ENCODE measurements at regions of chr10 and their contacts with region 1.

Region 1: DNA sequence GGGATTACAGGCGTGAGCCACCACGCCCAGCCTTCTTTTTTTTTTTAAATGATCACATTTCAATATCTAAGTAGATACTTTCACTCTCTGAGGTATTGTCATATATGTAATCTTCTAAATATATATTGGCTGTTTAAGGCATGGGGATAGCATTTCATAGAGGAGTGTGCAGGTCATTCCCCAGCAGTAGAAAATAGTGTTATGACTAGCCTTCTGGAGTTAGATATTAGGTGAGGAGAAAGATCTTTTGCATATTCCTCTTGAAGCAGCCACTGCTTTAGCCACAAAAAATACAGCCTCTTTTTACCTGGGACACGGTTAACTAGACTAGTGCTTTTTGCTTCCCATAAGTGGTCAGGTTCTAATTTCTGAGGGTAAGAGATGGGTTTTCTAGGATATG is 28.9 kb downstream of the ADD3 start:
- DNase-seq: no peak
- H3K4me3 Mint-ChIP-seq: no peak overlapping the region
- H3K27ac Mint-ChIP-seq: peak overlapping the region; percentile 91
- H3K4me1 Mint-ChIP-seq: peaks cover 91% of the 10 kb centered on the region
- H3K27me3 Mint-ChIP-seq: no peaks in the 10 kb centered on the region

Region 2: GRCh38 chr10:109914966-109915365 is 121.7 kb before region 1 on chr10:
- CTCF ChIA-PET with region 1: no interaction called
- intact Hi-C with region 1: loop called (anchors 1 kb)
- DNase-seq: peak; percentile 72
- H3K4me3 Mint-ChIP-seq: no peak overlapping the region
- H3K27ac Mint-ChIP-seq: peak overlapping the region; percentile 67
- H3K4me1 Mint-ChIP-seq: peaks cover 86% of the 10 kb centered on the region
- H3K27me3 Mint-ChIP-seq: no peaks in the 10 kb centered on the region

Region 3: GRCh38 chr10:110051487-110051886 is 14.8 kb after region 1 on chr10:
- CTCF ChIA-PET with region 1: interaction called, 5 read pairs
- intact Hi-C with region 1: loop called (anchors 1 kb)
- DNase-seq: no peak
- H3K4me3 Mint-ChIP-seq: no peak overlapping the region
- H3K27ac Mint-ChIP-seq: no peak overlapping the region
- H3K4me1 Mint-ChIP-seq: peaks cover 73% of the 10 kb centered on the region
- H3K27me3 Mint-ChIP-seq: no peaks in the 10 kb centered on the region

Region 4: DNA sequence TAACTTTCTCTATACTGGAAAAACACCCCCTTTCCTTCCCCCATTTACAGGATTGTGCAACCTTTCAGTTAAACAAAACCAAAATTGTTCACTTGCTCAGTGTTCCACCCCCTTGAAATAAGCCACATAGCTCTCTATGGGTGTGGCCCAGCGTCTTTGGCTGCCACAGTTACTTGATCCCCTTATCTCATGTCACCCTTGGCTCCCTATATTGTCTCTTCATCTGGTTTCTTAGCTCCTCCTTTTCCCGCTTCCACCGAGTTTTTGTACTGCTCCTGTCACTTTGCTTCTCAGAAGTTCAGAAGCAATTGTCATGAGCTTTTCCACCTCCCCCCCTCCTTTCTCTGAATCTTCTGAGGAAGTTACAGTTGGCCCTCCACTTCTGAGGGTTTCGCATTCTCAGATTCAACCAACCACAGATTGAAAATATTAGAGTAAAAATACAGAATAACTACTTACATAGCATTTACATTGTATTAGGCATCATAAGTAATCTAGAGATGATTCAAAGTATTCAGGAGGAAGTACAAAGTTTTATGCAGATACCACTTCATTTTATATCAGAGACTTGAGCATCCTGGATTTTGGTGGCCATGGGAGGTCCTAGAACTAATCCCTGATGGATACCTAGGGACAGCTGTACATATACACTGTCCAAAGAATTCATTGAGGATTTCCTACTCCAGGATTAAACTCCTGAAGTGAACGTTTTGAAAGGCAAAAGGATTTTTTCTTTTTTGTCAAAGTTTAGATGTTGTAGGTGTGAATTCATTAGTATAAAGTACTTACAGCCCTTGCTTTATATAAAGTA is 31.5 kb after region 1 on chr10:
- CTCF ChIA-PET with region 1: no interaction called
- intact Hi-C with region 1: loop called (anchors 1 kb)
- DNase-seq: peak; percentile 75
- H3K4me3 Mint-ChIP-seq: peak overlapping the region; percentile 56
- H3K27ac Mint-ChIP-seq: peak overlapping the region; percentile 91
- H3K4me1 Mint-ChIP-seq: peaks cover 82% of the 10 kb centered on the region
- H3K27me3 Mint-ChIP-seq: no peaks in the 10 kb centered on the region

Region 5: DNA sequence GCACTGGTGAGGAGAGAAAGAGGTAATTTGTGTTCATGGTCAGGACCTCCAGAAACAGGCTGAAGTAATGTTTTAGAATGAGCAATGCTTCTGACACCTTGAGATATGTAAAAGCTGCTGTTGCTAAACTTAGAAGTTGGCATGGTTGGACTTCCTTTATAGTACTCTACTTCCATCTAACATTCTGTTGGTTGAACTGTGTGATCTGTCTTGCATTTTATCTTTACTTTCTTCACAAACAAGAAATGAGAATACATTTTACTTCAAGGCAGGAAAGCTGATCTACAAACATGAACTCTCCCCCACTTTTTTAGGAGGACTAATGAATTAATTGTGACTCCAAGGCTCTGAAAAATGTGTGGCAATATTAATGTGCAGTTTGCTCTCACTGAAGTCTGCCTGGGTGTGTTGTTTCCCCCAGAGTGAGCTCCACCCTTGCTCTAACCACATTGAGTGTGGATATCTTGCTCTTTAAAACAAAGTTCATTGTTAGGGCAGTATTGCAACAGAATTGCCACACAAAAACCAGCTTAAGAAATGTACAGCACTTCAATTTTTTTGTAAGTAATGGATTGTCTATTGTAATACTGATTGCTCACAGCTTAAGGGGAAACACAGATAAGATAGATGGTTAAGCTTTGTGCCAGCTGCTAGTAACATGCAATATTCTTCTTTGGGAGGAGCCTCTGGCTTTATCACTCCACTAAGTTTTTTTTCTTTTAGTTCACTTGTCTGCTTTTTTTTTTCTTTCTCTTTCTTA is 40.1 kb after region 1 on chr10:
- CTCF ChIA-PET with region 1: interaction called, 4 read pairs
- intact Hi-C with region 1: loop called (anchors 1 kb)
- DNase-seq: no peak
- H3K4me3 Mint-ChIP-seq: peak overlapping the region; percentile 70
- H3K27ac Mint-ChIP-seq: peak overlapping the region; percentile 92
- H3K4me1 Mint-ChIP-seq: peaks cover 87% of the 10 kb centered on the region
- H3K27me3 Mint-ChIP-seq: no peaks in the 10 kb centered on the region

Region 6: DNA sequence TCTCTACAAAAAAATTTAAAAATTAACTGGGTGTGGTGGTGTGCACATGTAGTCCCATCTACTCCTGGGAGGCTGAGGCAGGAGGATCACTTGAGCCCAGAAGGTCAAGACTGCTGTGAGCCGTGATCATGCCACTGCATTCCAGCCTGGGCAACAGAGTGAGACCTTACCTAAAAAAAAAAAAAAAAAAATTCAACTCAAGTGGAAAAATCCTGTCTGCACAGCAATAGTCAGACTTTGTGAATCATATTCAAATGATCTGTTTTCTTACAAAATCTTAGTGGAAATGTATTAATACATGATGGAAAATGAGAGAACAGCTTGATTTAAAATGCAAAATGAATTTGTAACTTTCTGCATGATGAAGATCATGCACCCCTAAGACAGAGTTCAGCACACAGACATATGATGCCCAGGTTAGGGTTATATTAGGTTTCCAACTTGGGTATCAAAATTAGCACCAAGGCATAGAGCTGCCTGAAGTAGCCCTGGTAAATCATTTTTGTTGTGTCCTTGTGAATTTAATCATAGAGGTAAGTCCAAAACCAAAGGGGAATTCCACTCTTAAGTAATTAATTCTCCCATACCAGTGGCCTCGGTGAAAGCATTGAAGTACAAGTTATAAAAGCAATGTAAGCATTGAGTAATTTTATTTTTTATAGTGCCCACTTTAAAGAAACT is 65.0 kb after region 1 on chr10:
- CTCF ChIA-PET with region 1: interaction called, 4 read pairs
- intact Hi-C with region 1: loop called (anchors 1 kb)
- DNase-seq: no peak
- H3K4me3 Mint-ChIP-seq: no peak overlapping the region
- H3K27ac Mint-ChIP-seq: peak overlapping the region; percentile 89
- H3K4me1 Mint-ChIP-seq: peaks cover 76% of the 10 kb centered on the region
- H3K27me3 Mint-ChIP-seq: no peaks in the 10 kb centered on the region

Measured in activated naive CD4-positive, alpha-beta T cell treated with anti-CD3 and anti-CD28 coated beads for 36 hours (primary cell).